HAP-1 (cell line): ENCODE measurements at regions of chr3 and their contacts with region 1.

Region 1: GRCh38 chr3:14461748-14462324 is 59.4 kb downstream of the SLC6A6 start:
- DNase-seq: peak in 1 of 2 experiments; percentile 37
- H3K4me3 ChIP-seq: no peak overlapping the region
- H3K4me1 ChIP-seq: no peaks in the 10 kb centered on the region; the same call in 1 of the 2 replicates
- H3K27me3 ChIP-seq: no peaks in the 10 kb centered on the region

Region 2: GRCh38 chr3:13895155-13896105 is 566.4 kb before region 1 on chr3:
- in situ Hi-C with region 1: loop called (anchors 10 kb)
- DNase-seq: peak; percentile 58 to 89
- H3K4me3 ChIP-seq: peak overlapping the region; percentile 22
- H3K4me1 ChIP-seq: peaks cover 2% of the 10 kb centered on the region; the same call in 1 of the 2 replicates
- H3K27me3 ChIP-seq: no peaks in the 10 kb centered on the region; the same call in 1 of the 2 replicates

Region 3: GRCh38 chr3:14001136-14001535 is 460.7 kb before region 1 on chr3:
- in situ Hi-C with region 1: no loop called
- DNase-seq: no peak
- H3K4me3 ChIP-seq: no peak overlapping the region
- H3K4me1 ChIP-seq: peaks cover 10% of the 10 kb centered on the region
- H3K27me3 ChIP-seq: no peaks in the 10 kb centered on the region; the same call in 1 of the 2 replicates

Region 4: GRCh38 chr3:14261229-14261628 is 200.6 kb before region 1 on chr3:
- in situ Hi-C with region 1: loop called (anchors 5 kb)
- DNase-seq: peak; percentile 64 to 90
- H3K4me3 ChIP-seq: no peak overlapping the region
- H3K4me1 ChIP-seq: no peaks in the 10 kb centered on the region
- H3K27me3 ChIP-seq: no peaks in the 10 kb centered on the region; the same call in 1 of the 2 replicates

Region 5: GRCh38 chr3:15096046-15096445 is 634.2 kb after region 1 on chr3:
- in situ Hi-C with region 1: no loop called
- DNase-seq: no peak
- H3K4me3 ChIP-seq: no peak overlapping the region
- H3K4me1 ChIP-seq: peaks cover 7% of the 10 kb centered on the region
- H3K27me3 ChIP-seq: no peaks in the 10 kb centered on the region